CD8-positive, alpha-beta T cell (primary cell): ENCODE measurements at regions of chr11 and their contacts with region 1.

Region 1: DNA sequence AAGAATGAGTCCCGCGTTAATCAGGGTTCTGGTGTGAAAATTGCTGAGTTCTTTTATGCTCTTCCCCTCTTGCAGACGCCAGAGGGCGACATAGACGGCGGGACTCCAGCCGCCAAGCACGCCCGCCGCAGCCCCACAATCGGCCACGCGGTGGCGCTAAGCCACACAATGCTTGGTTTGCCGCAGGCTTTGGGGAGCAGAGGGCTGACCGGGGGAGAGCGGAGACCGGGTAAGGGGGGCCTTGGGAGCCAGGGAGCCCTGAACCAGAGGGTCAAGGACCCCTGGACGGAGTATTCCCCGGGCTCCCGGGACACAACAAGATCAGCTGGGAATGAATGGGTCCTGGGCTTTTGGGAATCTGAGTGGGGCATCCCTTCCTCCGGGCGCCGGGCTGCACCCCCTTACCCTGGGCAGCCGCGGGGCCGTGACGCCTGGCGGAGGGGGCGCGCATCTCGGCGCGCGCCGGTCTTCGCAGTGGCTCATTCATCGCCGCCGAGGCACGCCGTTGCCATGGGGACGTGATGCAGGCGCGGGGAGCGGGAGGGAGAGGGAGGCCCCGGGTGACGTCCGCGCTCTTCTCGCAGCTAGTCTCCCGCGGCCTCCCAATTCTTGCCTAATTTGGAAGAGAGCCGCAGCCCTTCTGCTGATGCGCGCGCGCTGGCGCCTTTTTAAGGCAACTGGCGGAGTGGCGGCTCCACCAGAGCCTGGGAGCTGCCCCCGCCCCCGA is 12.2 kb upstream of the NPAS4 start:
- DNase-seq: peak; percentile 88 to 97 (median 92)
- ATAC-seq: peak; percentile 85
- H3K4me3 ChIP-seq: peak overlapping the region; percentile 18 to 62
- H3K4me3 Mint-ChIP-seq: peak overlapping the region; percentile 79
- H3K27ac ChIP-seq: no peak overlapping the region
- H3K27ac Mint-ChIP-seq: no peak overlapping the region
- H3K4me1 ChIP-seq: peaks cover 8% of the 10 kb centered on the region
- H3K4me1 Mint-ChIP-seq: peaks cover 4% of the 10 kb centered on the region
- H3K27me3 ChIP-seq: peaks cover 4 to 14% of the 10 kb centered on the region in 2 experiments
- H3K27me3 Mint-ChIP-seq: peaks cover 41% of the 10 kb centered on the region
- CTCF ChIP-seq: peak; percentile 100

Region 2: DNA sequence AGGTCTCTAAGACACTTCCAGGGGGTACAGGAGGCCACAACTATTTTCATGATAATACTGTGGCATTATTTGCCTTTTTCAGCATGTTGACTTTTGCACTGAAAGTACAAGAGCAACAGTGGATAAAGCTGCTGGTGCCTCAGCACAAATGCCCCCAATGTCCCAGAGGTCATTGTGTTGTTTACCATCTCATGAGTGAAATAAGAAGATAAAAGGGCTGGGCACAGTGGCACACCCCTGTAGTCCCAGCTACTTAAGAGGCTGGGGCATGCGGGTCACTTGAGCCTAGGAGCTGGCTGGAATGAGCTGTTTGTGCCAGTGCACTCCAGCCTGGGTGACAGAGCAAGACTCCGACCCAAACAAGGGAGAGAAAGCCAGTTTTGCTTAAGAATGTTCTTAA is 212.8 kb before region 1 on chr11:
- CTCF ChIA-PET with region 1: no interaction called
- POLR2A ChIA-PET with region 1: no interaction called
- intact Hi-C with region 1: no loop called
- DNase-seq: no peak
- ATAC-seq: no peak
- H3K4me3 ChIP-seq: no peak overlapping the region
- H3K4me3 Mint-ChIP-seq: no peak overlapping the region
- H3K27ac ChIP-seq: no peak overlapping the region
- H3K27ac Mint-ChIP-seq: no peak overlapping the region
- H3K4me1 ChIP-seq: no peaks in the 10 kb centered on the region
- H3K4me1 Mint-ChIP-seq: peaks cover 12% of the 10 kb centered on the region
- H3K27me3 ChIP-seq: no peaks in the 10 kb centered on the region
- H3K27me3 Mint-ChIP-seq: no peaks in the 10 kb centered on the region
- CTCF ChIP-seq: no peak

Region 3: GRCh38 chr11:66363805-66364535 is 44.7 kb before region 1 on chr11:
- CTCF ChIA-PET with region 1: no interaction called
- POLR2A ChIA-PET with region 1: no interaction called
- intact Hi-C with region 1: no loop called
- DNase-seq: peak; percentile 42 to 78 (median 65)
- ATAC-seq: peak; percentile 83
- H3K4me3 ChIP-seq: no peak overlapping the region
- H3K4me3 Mint-ChIP-seq: no peak overlapping the region
- H3K27ac ChIP-seq: no peak overlapping the region
- H3K27ac Mint-ChIP-seq: no peak overlapping the region
- H3K4me1 ChIP-seq: no peaks in the 10 kb centered on the region
- H3K4me1 Mint-ChIP-seq: no peaks in the 10 kb centered on the region
- H3K27me3 ChIP-seq: no peaks in the 10 kb centered on the region
- H3K27me3 Mint-ChIP-seq: no peaks in the 10 kb centered on the region
- CTCF ChIP-seq: peak; percentile 76

Region 4: GRCh38 chr11:66386171-66387069 is 22.2 kb before region 1 on chr11:
- CTCF ChIA-PET with region 1: interaction called, 7 read pairs
- POLR2A ChIA-PET with region 1: no interaction called
- intact Hi-C with region 1: loop called in 1 of 2 experiments (anchors 1 kb)
- DNase-seq: peak; percentile 67 to 90 (median 83)
- ATAC-seq: peak; percentile 75
- H3K4me3 ChIP-seq: no peak overlapping the region
- H3K4me3 Mint-ChIP-seq: peak overlapping the region; percentile 18
- H3K27ac ChIP-seq: no peak overlapping the region
- H3K27ac Mint-ChIP-seq: no peak overlapping the region
- H3K4me1 ChIP-seq: peaks cover 5% of the 10 kb centered on the region
- H3K4me1 Mint-ChIP-seq: peaks cover 8% of the 10 kb centered on the region
- H3K27me3 ChIP-seq: no peaks in the 10 kb centered on the region
- H3K27me3 Mint-ChIP-seq: no peaks in the 10 kb centered on the region
- CTCF ChIP-seq: peak; percentile 77

Region 5: DNA sequence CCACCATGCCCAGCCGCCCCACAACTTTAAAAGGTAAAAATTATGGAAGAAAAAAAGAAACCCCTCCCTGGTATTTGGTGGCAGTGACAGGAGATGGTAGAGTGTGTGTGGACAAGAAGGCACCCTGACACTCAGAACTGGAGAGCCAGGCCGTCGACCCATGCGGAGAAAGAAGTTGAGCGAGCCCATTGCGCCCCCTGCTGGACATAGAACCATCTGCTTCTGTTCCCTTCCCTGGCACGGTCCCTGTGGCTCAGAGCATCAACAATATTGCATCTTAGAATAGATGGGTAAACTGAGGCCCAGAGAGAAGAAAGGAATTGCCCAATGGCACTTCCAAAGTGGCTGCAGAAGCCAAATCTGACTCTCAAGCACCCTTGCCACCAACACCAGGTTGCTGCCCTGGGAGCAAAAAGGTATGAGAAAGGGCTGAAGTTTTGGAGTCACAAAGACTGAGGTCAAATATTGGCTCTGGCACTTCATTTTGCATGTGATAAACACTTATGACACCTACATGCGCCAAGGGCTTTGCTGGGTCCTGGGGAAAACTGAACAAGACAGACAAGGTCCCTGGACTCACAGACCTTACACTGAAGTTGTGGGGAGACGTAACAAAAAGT is 21.4 kb after region 1 on chr11:
- CTCF ChIA-PET with region 1: interaction called, 69 read pairs
- POLR2A ChIA-PET with region 1: no interaction called
- intact Hi-C with region 1: loop called (anchors 1 kb)
- DNase-seq: peak; percentile 41 to 80 (median 76)
- ATAC-seq: peak; percentile 71
- H3K4me3 ChIP-seq: no peak overlapping the region
- H3K4me3 Mint-ChIP-seq: no peak overlapping the region
- H3K27ac ChIP-seq: no peak overlapping the region
- H3K27ac Mint-ChIP-seq: no peak overlapping the region
- H3K4me1 ChIP-seq: no peaks in the 10 kb centered on the region
- H3K4me1 Mint-ChIP-seq: no peaks in the 10 kb centered on the region
- H3K27me3 ChIP-seq: no peaks in the 10 kb centered on the region
- H3K27me3 Mint-ChIP-seq: no peaks in the 10 kb centered on the region
- CTCF ChIP-seq: peak; percentile 79

Region 6: GRCh38 chr11:66480117-66480938 is 71.7 kb after region 1 on chr11 and contains the start of gene DPP3:
- CTCF ChIA-PET with region 1: interaction called, 7 read pairs
- POLR2A ChIA-PET with region 1: no interaction called
- intact Hi-C with region 1: loop called in 1 of 2 experiments (anchors 1 kb)
- DNase-seq: peak; percentile 91 to 97 (median 95)
- ATAC-seq: peak; percentile 98
- H3K4me3 ChIP-seq: peak within 1 kb of the TSS; percentile 90 to 93
- H3K4me3 Mint-ChIP-seq: peak within 1 kb of the TSS; percentile 89
- H3K27ac ChIP-seq: peak within 1 kb of the TSS; percentile 70 to 90
- H3K27ac Mint-ChIP-seq: peak within 1 kb of the TSS; percentile 89
- H3K4me1 ChIP-seq: peaks cover 17% of the 10 kb centered on the region
- H3K4me1 Mint-ChIP-seq: peaks cover 31% of the 10 kb centered on the region
- H3K27me3 ChIP-seq: no peaks in the 10 kb centered on the region
- H3K27me3 Mint-ChIP-seq: no peaks in the 10 kb centered on the region
- CTCF ChIP-seq: no peak
- total RNA-seq, gene DPP3: 13.7 to 15.6 TPM

Region 7: GRCh38 chr11:66835768-66836405 is 427.2 kb after region 1 on chr11:
- CTCF ChIA-PET with region 1: interaction called, 3 read pairs
- POLR2A ChIA-PET with region 1: no interaction called
- intact Hi-C with region 1: loop called in 1 of 2 experiments (anchors 1 kb)
- DNase-seq: no peak
- ATAC-seq: no peak
- H3K4me3 ChIP-seq: no peak overlapping the region
- H3K4me3 Mint-ChIP-seq: no peak overlapping the region
- H3K27ac ChIP-seq: no peak overlapping the region
- H3K27ac Mint-ChIP-seq: no peak overlapping the region
- H3K4me1 ChIP-seq: peaks cover 17% of the 10 kb centered on the region
- H3K4me1 Mint-ChIP-seq: peaks cover 33% of the 10 kb centered on the region
- H3K27me3 ChIP-seq: no peaks in the 10 kb centered on the region
- H3K27me3 Mint-ChIP-seq: no peaks in the 10 kb centered on the region
- CTCF ChIP-seq: no peak